WTC11 (cell line): ENCODE measurements at regions of chrX and their contacts with region 1.

Region 1: GRCh38 chrX:102950908-102951866 is 14.1 kb downstream of the RAB40AL start:
- DNase-seq: peak; percentile 74
- ATAC-seq: peak; percentile 86
- H3K4me3 Mint-ChIP-seq: peak overlapping the region; percentile 72
- H3K27ac Mint-ChIP-seq: no peak overlapping the region
- H3K4me1 Mint-ChIP-seq: peaks cover 4% of the 10 kb centered on the region
- H3K27me3 Mint-ChIP-seq: no peaks in the 10 kb centered on the region; the same call in 1 of the 2 replicates
- CTCF ChIP-seq: peak; percentile 38; the same call in 1 of the 2 replicates

Region 2: GRCh38 chrX:102866981-102867656 is 84.1 kb before region 1 on chrX:
- CTCF ChIA-PET with region 1: no interaction called
- POLR2A ChIA-PET with region 1: no interaction called
- DNase-seq: no peak
- ATAC-seq: no peak
- H3K4me3 Mint-ChIP-seq: no peak overlapping the region
- H3K27ac Mint-ChIP-seq: no peak overlapping the region
- H3K4me1 Mint-ChIP-seq: no peaks in the 10 kb centered on the region
- H3K27me3 Mint-ChIP-seq: no peaks in the 10 kb centered on the region
- CTCF ChIP-seq: no peak

Region 3: GRCh38 chrX:102934624-102935023 is 16.6 kb before region 1 on chrX:
- CTCF ChIA-PET with region 1: interaction called, 45 read pairs
- POLR2A ChIA-PET with region 1: no interaction called
- DNase-seq: peak; percentile 36
- ATAC-seq: no peak
- H3K4me3 Mint-ChIP-seq: no peak overlapping the region
- H3K27ac Mint-ChIP-seq: no peak overlapping the region
- H3K4me1 Mint-ChIP-seq: peaks cover 5% of the 10 kb centered on the region; the same call in 1 of the 2 replicates
- H3K27me3 Mint-ChIP-seq: no peaks in the 10 kb centered on the region; the same call in 1 of the 2 replicates
- CTCF ChIP-seq: peak; percentile 48; the same call in 1 of the 2 replicates

Region 4: GRCh38 chrX:103175944-103176753 is 225.0 kb after region 1 on chrX:
- CTCF ChIA-PET with region 1: interaction called, 46 read pairs
- POLR2A ChIA-PET with region 1: no interaction called
- DNase-seq: peak; percentile 60
- ATAC-seq: peak; percentile 84
- H3K4me3 Mint-ChIP-seq: peak overlapping the region; percentile 59
- H3K27ac Mint-ChIP-seq: no peak overlapping the region
- H3K4me1 Mint-ChIP-seq: peaks cover 7% of the 10 kb centered on the region; the same call in 1 of the 2 replicates
- H3K27me3 Mint-ChIP-seq: peaks cover 44% of the 10 kb centered on the region
- CTCF ChIP-seq: no peak; the same call in 1 of the 2 replicates

Region 5: GRCh38 chrX:103640401-103641155 is 689.4 kb after region 1 on chrX:
- CTCF ChIA-PET with region 1: no interaction called
- POLR2A ChIA-PET with region 1: no interaction called
- DNase-seq: no peak
- ATAC-seq: no peak
- H3K4me3 Mint-ChIP-seq: no peak overlapping the region
- H3K27ac Mint-ChIP-seq: no peak overlapping the region
- H3K4me1 Mint-ChIP-seq: no peaks in the 10 kb centered on the region
- H3K27me3 Mint-ChIP-seq: peaks cover 9% of the 10 kb centered on the region
- CTCF ChIP-seq: no peak

Region 6: GRCh38 chrX:104136241-104137019 is 1185.2 kb after region 1 on chrX:
- CTCF ChIA-PET with region 1: no interaction called
- POLR2A ChIA-PET with region 1: no interaction called
- DNase-seq: peak; percentile 51
- ATAC-seq: peak; percentile 86
- H3K4me3 Mint-ChIP-seq: peak overlapping the region; percentile 37
- H3K27ac Mint-ChIP-seq: no peak overlapping the region
- H3K4me1 Mint-ChIP-seq: no peaks in the 10 kb centered on the region
- H3K27me3 Mint-ChIP-seq: no peaks in the 10 kb centered on the region; the same call in 1 of the 2 replicates
- CTCF ChIP-seq: peak; percentile 39; the same call in 1 of the 2 replicates